Activated naive CD4-positive, alpha-beta T cell treated with anti-CD3 and anti-CD28 coated beads for 36 hours (primary cell): ENCODE measurements at regions of chr3 and their contacts with region 1.

Region 1: GRCh38 chr3:66998113-66998903 is at the start of gene KBTBD8:
- DNase-seq: peak; percentile 98
- H3K4me3 Mint-ChIP-seq: peak within 1 kb of the TSS; percentile 87
- H3K27ac Mint-ChIP-seq: peak within 1 kb of the TSS; percentile 95
- H3K4me1 Mint-ChIP-seq: peaks cover 27% of the 10 kb centered on the region
- H3K27me3 Mint-ChIP-seq: peaks cover 4% of the 10 kb centered on the region
- total RNA-seq, gene KBTBD8: 6.8 to 7.4 TPM

Region 2: DNA sequence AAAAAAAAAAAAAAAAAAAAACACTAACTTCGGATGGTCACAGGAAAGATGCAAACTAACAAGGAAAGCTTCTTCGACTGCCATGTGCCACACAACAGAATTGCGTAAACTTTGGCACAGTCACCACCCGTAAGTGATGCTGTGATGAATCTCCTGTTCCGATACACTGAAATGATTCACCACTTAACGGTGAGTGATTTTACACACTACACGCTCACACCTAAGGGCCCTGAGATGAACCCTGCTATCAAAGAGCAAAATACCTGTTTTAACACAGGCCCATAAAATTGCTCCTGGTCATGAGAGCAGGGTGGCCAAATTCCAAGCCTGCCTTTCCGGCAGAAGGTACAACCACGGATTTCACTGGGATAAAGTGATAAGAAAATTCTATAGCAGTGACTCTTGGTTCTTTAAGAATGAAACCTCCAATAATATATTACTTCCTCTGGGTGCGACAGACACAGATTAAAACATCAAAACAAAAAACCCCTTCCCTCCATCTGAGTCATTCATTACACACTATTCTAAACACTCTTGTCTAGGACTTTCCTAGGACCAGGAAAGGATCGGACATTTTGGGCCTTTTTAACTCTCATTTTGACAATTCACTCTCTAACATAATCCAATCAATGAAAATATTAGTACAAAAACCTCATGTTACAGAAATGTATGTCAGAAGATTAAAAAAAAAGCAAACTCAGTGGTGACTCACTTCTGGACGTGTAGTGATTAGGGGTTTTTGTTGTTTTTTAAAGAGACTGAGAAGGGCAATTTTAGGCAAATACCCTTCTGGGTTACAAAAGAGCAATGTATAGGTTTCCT is 525.8 kb before region 1 on chr3:
- CTCF ChIA-PET with region 1: no interaction called
- intact Hi-C with region 1: loop called (anchors 2 kb)
- DNase-seq: peak; percentile 77
- H3K4me3 Mint-ChIP-seq: peak overlapping the region; percentile 42
- H3K27ac Mint-ChIP-seq: peak overlapping the region; percentile 94
- H3K4me1 Mint-ChIP-seq: peaks cover 64% of the 10 kb centered on the region
- H3K27me3 Mint-ChIP-seq: no peaks in the 10 kb centered on the region

Region 3: GRCh38 chr3:66957367-66957766 is 40.9 kb before region 1 on chr3:
- CTCF ChIA-PET with region 1: no interaction called
- intact Hi-C with region 1: no loop called
- DNase-seq: no peak
- H3K4me3 Mint-ChIP-seq: no peak overlapping the region
- H3K27ac Mint-ChIP-seq: no peak overlapping the region
- H3K4me1 Mint-ChIP-seq: no peaks in the 10 kb centered on the region
- H3K27me3 Mint-ChIP-seq: no peaks in the 10 kb centered on the region

Region 4: GRCh38 chr3:67018105-67018788 is 19.9 kb after region 1 on chr3:
- CTCF ChIA-PET with region 1: no interaction called
- intact Hi-C with region 1: loop called (anchors 1 kb)
- DNase-seq: peak; percentile 39
- H3K4me3 Mint-ChIP-seq: peak overlapping the region; percentile 30
- H3K27ac Mint-ChIP-seq: peak overlapping the region; percentile 10
- H3K4me1 Mint-ChIP-seq: peaks cover 30% of the 10 kb centered on the region
- H3K27me3 Mint-ChIP-seq: no peaks in the 10 kb centered on the region

Region 5: DNA sequence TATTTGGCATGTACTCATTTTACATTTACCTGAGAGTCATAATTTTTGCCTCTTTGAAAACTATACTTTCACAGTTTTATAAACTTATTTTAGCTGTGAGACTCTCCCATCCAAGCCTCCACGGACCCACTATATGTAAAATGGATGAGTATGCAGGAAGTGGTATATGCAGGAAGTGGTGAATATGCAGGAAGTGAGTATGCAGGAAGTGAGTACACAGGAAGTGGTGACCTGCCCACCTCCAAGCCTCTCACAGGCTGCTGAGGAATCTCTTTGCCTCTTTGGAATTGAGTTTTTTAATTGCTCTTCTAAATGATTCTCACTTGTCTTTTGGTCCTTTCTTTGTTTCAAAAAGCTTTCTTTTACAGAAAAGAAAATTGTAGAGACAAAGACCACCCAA is 85.0 kb after region 1 on chr3:
- CTCF ChIA-PET with region 1: no interaction called
- intact Hi-C with region 1: loop called (anchors 1 kb)
- DNase-seq: peak; percentile 79
- H3K4me3 Mint-ChIP-seq: peak overlapping the region; percentile 61
- H3K27ac Mint-ChIP-seq: peak overlapping the region; percentile 94
- H3K4me1 Mint-ChIP-seq: peaks cover 31% of the 10 kb centered on the region
- H3K27me3 Mint-ChIP-seq: no peaks in the 10 kb centered on the region

Region 6: GRCh38 chr3:67551361-67552016 is 553.2 kb after region 1 on chr3:
- CTCF ChIA-PET with region 1: no interaction called
- intact Hi-C with region 1: no loop called
- DNase-seq: no peak
- H3K4me3 Mint-ChIP-seq: no peak overlapping the region
- H3K27ac Mint-ChIP-seq: no peak overlapping the region
- H3K4me1 Mint-ChIP-seq: peaks cover 7% of the 10 kb centered on the region
- H3K27me3 Mint-ChIP-seq: no peaks in the 10 kb centered on the region

Region 7: GRCh38 chr3:67739851-67740250 is 741.5 kb after region 1 on chr3:
- CTCF ChIA-PET with region 1: no interaction called
- intact Hi-C with region 1: loop called (anchors 2 kb)
- DNase-seq: no peak
- H3K4me3 Mint-ChIP-seq: no peak overlapping the region
- H3K27ac Mint-ChIP-seq: peak overlapping the region; percentile 9
- H3K4me1 Mint-ChIP-seq: peaks cover 66% of the 10 kb centered on the region
- H3K27me3 Mint-ChIP-seq: no peaks in the 10 kb centered on the region